ENCODE measurements at regions of chr2 and their contacts with region 1.

Region 1: GRCh38 chr2:229133155-229133772 is 137.8 kb downstream of the PID1 start:
- DNase-seq: peak; percentile 41
- H3K4me3 Mint-ChIP-seq: no peak overlapping the region
- H3K27ac Mint-ChIP-seq: no peak overlapping the region
- H3K4me1 Mint-ChIP-seq: no peaks in the 10 kb centered on the region
- H3K27me3 Mint-ChIP-seq: no peaks in the 10 kb centered on the region
- CTCF ChIP-seq: peak; percentile 46

Region 2: GRCh38 chr2:229273723-229274338 is 140.6 kb after region 1 on chr2:
- CTCF ChIA-PET with region 1: no interaction called
- intact Hi-C with region 1: loop called (anchors 2 kb)
- DNase-seq: peak; percentile 60
- H3K4me3 Mint-ChIP-seq: peak overlapping the region; percentile 34
- H3K27ac Mint-ChIP-seq: no peak overlapping the region
- H3K4me1 Mint-ChIP-seq: peaks cover 22% of the 10 kb centered on the region
- H3K27me3 Mint-ChIP-seq: peaks cover 41% of the 10 kb centered on the region
- CTCF ChIP-seq: peak; percentile 68

Region 3: GRCh38 chr2:229431327-229431954 is 298.2 kb after region 1 on chr2:
- CTCF ChIA-PET with region 1: no interaction called
- intact Hi-C with region 1: loop called (anchors 1 kb)
- DNase-seq: no peak
- H3K4me3 Mint-ChIP-seq: no peak overlapping the region
- H3K27ac Mint-ChIP-seq: no peak overlapping the region
- H3K4me1 Mint-ChIP-seq: peaks cover 5% of the 10 kb centered on the region
- H3K27me3 Mint-ChIP-seq: no peaks in the 10 kb centered on the region
- CTCF ChIP-seq: peak; percentile 19